ENCODE measurements at regions of chr9 and their contacts with region 1.

Region 1: DNA sequence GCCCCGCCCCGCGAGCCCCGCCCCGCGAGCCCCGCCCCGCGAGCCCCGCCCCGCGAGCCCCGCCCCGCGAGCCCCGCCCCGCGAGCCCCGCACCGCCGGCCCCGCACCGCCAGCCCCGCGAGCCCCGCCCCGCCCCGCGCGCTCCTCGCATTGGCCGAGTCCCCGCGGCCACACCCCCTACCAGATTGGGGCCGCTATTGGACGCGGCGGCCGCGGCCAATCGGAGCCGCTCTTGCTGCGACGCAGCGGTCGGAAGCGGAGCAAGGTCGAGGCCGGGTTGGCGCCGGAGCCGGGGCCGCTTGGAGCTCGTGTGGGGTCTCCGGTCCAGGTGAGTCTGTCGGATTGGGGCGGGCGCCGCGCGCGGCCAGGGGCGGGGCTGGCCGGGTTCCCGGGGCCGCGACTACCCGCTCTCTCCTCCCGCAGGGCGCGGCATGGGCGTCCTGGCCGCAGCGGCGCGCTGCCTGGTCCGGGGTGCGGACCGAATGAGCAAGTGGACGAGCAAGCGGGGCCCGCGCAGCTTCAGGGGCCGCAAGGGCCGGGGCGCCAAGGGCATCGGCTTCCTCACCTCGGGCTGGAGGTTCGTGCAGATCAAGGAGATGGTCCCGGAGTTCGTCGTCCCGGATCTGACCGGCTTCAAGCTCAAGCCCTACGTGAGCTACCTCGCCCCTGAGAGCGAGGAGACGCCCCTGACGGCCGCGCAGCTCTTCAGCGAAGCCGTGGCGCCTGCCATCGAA is at the start of gene MRPL41:
- DNase-seq: peak; percentile 90 to 93
- H3K4me3 ChIP-seq: peak within 1 kb of the TSS; percentile 81
- H3K4me3 Mint-ChIP-seq: peak within 1 kb of the TSS; percentile 81
- H3K27ac Mint-ChIP-seq: peak within 1 kb of the TSS; percentile 66
- H3K4me1 ChIP-seq: peaks cover 5% of the 10 kb centered on the region; the same call in 1 of the 2 replicates
- H3K4me1 Mint-ChIP-seq: peaks cover 16% of the 10 kb centered on the region
- H3K27me3 ChIP-seq: no peaks in the 10 kb centered on the region
- H3K27me3 Mint-ChIP-seq: no peaks in the 10 kb centered on the region
- CTCF ChIP-seq: no peak
- total RNA-seq, gene MRPL41: 44.2 and 48.6 TPM in 2 replicates

Region 2: GRCh38 chr9:136671646-136672430 is 880.0 kb before region 1 on chr9:
- CTCF ChIA-PET with region 1: no interaction called
- POLR2A ChIA-PET with region 1: no interaction called
- intact Hi-C with region 1: no loop called
- DNase-seq: peak in 1 of 2 experiments; percentile 64
- H3K4me3 ChIP-seq: no peak overlapping the region
- H3K4me3 Mint-ChIP-seq: no peak overlapping the region
- H3K27ac Mint-ChIP-seq: no peak overlapping the region
- H3K4me1 ChIP-seq: peaks cover 19% of the 10 kb centered on the region
- H3K4me1 Mint-ChIP-seq: no peaks in the 10 kb centered on the region
- H3K27me3 ChIP-seq: no peaks in the 10 kb centered on the region
- H3K27me3 Mint-ChIP-seq: no peaks in the 10 kb centered on the region
- CTCF ChIP-seq: peak; percentile 76 to 83

Region 3: DNA sequence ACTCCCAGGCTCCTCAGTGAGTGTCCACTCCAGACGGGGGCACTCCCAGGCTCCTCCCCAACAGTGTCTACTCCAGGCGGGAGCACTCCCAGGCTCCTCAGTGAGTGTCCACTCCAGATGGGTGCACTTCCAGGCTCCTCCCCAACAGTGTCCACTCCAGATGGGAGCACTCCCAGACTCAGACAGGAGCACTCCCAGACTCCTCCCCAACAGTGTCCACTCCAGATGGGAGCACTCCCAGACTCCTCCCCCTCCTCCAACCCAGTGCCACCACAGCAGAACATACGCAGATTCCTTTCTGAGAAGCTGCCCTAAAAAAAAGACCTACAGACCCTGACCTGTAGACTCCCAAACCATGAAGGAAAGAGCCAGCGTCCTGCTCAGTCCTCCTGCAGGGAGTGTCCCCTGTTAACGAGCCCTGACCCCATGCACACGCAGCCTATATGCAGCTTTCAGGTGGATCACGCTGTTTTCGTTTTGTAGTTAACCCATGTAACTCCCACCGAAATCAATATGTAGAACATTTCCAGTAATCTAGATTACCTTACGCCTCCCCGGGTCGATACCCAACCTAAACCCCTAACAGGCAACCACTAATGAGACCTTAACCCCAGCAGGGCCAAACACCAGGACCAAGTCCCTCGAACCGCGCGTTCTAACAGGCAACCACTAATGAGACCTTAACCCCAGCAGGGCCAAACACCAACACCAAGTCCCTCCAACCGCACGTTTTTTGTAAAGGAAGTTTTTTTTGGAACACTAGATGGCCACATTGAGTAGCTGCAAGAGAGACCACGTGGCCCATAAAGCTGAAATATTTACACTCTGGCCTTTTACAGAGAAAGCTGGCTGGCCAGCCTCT is 17.3 kb before region 1 on chr9:
- CTCF ChIA-PET with region 1: interaction called, 33 read pairs
- POLR2A ChIA-PET with region 1: interaction called, 3 read pairs
- intact Hi-C with region 1: loop called (anchors 1 kb)
- DNase-seq: peak; percentile 72 to 77
- H3K4me3 ChIP-seq: no peak overlapping the region
- H3K4me3 Mint-ChIP-seq: peak overlapping the region; percentile 52
- H3K27ac Mint-ChIP-seq: peak overlapping the region; percentile 45
- H3K4me1 ChIP-seq: peaks cover 7% of the 10 kb centered on the region; the same call in 1 of the 2 replicates
- H3K4me1 Mint-ChIP-seq: peaks cover 7% of the 10 kb centered on the region
- H3K27me3 ChIP-seq: no peaks in the 10 kb centered on the region
- H3K27me3 Mint-ChIP-seq: no peaks in the 10 kb centered on the region
- CTCF ChIP-seq: peak; percentile 60 to 75

Region 4: GRCh38 chr9:137578518-137579258 is 26.9 kb after region 1 on chr9 and contains the start of gene DPH7:
- CTCF ChIA-PET with region 1: interaction called, 13 read pairs
- POLR2A ChIA-PET with region 1: interaction called, 3 read pairs
- intact Hi-C with region 1: no loop called
- DNase-seq: peak; percentile 94 to 98
- H3K4me3 ChIP-seq: peak within 1 kb of the TSS; percentile 96
- H3K4me3 Mint-ChIP-seq: peak within 1 kb of the TSS; percentile 83
- H3K27ac Mint-ChIP-seq: peak within 1 kb of the TSS; percentile 66
- H3K4me1 ChIP-seq: peaks cover 13% of the 10 kb centered on the region
- H3K4me1 Mint-ChIP-seq: no peaks in the 10 kb centered on the region
- H3K27me3 ChIP-seq: no peaks in the 10 kb centered on the region
- H3K27me3 Mint-ChIP-seq: no peaks in the 10 kb centered on the region
- CTCF ChIP-seq: peak; percentile 90 to 94
- total RNA-seq, gene DPH7: 51.9 and 58.4 TPM in 2 replicates

Region 5: GRCh38 chr9:137605121-137606004 is 53.5 kb after region 1 on chr9 and contains the start of gene ARRDC1:
- CTCF ChIA-PET with region 1: no interaction called
- POLR2A ChIA-PET with region 1: no interaction called
- intact Hi-C with region 1: loop called (anchors 5 kb)
- DNase-seq: peak; percentile 95 to 98
- H3K4me3 ChIP-seq: peak within 1 kb of the TSS; percentile 85
- H3K4me3 Mint-ChIP-seq: peak within 1 kb of the TSS; percentile 76
- H3K27ac Mint-ChIP-seq: peak within 1 kb of the TSS; percentile 84
- H3K4me1 ChIP-seq: peaks cover 16% of the 10 kb centered on the region
- H3K4me1 Mint-ChIP-seq: peaks cover 14% of the 10 kb centered on the region
- H3K27me3 ChIP-seq: no peaks in the 10 kb centered on the region
- H3K27me3 Mint-ChIP-seq: no peaks in the 10 kb centered on the region
- CTCF ChIP-seq: no peak
- total RNA-seq, gene ARRDC1: 61.1 and 66.6 TPM in 2 replicates

Measured in Caco-2 (cell line).